ENCODE measurements at regions of chr4 and their contacts with region 1.

Region 1: GRCh38 chr4:113837397-113837796 is 75.9 kb upstream of the CAMK2D start:
- DNase-seq: no peak
- H3K4me3 Mint-ChIP-seq: no peak overlapping the region
- H3K27ac Mint-ChIP-seq: no peak overlapping the region
- H3K4me1 Mint-ChIP-seq: peaks cover 9% of the 10 kb centered on the region
- H3K27me3 Mint-ChIP-seq: no peaks in the 10 kb centered on the region

Region 2: DNA sequence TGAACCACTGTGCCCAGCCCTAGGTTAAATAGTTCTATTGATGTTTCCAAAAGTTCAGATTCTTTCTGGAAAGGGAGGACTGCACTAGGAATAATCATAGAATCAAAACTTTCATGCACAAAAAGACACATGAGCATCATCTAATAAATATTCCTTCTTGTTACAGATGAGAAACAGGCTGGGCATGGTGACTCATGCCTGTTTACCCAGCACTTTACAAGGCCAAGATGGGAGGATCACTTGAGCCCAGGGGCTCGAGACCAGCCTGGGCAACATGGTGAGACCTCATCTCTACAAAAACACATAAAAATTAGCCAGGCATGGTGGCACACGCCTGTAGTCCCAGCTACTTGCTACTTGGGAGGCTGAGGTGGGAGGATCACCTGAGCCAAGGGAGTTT is 1172.8 kb before region 1 on chr4:
- CTCF ChIA-PET with region 1: no interaction called
- intact Hi-C with region 1: no loop called
- DNase-seq: no peak
- H3K4me3 Mint-ChIP-seq: no peak overlapping the region
- H3K27ac Mint-ChIP-seq: no peak overlapping the region
- H3K4me1 Mint-ChIP-seq: no peaks in the 10 kb centered on the region
- H3K27me3 Mint-ChIP-seq: no peaks in the 10 kb centered on the region

Region 3: DNA sequence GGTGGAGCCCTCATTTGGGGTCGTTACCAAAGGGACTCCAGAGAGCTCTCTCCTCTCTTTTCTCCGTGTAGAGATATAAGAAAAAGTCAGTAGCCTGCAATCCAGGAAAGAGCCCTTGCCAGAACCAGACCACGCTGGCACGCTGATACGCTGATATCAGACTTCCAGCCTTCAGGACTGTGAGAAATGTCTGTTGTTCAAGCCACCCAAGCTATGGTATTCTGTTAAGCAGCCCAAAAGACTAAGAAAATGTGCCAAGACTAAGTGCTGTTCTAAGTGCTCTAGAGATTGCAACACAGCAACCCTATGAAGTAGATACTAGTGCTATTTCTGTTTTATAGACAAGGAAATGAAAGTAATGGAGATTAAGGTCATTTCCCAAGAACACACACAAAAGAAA is 281.5 kb before region 1 on chr4:
- CTCF ChIA-PET with region 1: no interaction called
- intact Hi-C with region 1: no loop called
- DNase-seq: no peak
- H3K4me3 Mint-ChIP-seq: no peak overlapping the region
- H3K27ac Mint-ChIP-seq: no peak overlapping the region
- H3K4me1 Mint-ChIP-seq: peaks cover 7% of the 10 kb centered on the region
- H3K27me3 Mint-ChIP-seq: no peaks in the 10 kb centered on the region

Region 4: GRCh38 chr4:113869743-113870375 is 32.5 kb after region 1 on chr4:
- CTCF ChIA-PET with region 1: interaction called, 3 read pairs
- intact Hi-C with region 1: loop called (anchors 2 kb)
- DNase-seq: peak; percentile 80
- H3K4me3 Mint-ChIP-seq: no peak overlapping the region
- H3K27ac Mint-ChIP-seq: peak overlapping the region; percentile 82
- H3K4me1 Mint-ChIP-seq: peaks cover 19% of the 10 kb centered on the region
- H3K27me3 Mint-ChIP-seq: no peaks in the 10 kb centered on the region

Measured in activated naive CD4-positive, alpha-beta T cell treated with anti-CD3 and anti-CD28 coated beads for 36 hours (primary cell).